ENCODE measurements at regions of chr3 and their contacts with region 1.

Region 1: GRCh38 chr3:120095226-120095978 is 1.2 kb upstream of the GSK3B start:
- DNase-seq: peak; percentile 85
- ATAC-seq: peak; percentile 20
- H3K4me3 Mint-ChIP-seq: no peak overlapping the region
- H3K27ac Mint-ChIP-seq: no peak overlapping the region
- H3K4me1 Mint-ChIP-seq: peaks cover 12% of the 10 kb centered on the region
- H3K27me3 Mint-ChIP-seq: no peaks in the 10 kb centered on the region
- CTCF ChIP-seq: no peak

Region 2: GRCh38 chr3:119293871-119294695 is 801.3 kb before region 1 on chr3 and contains the start of gene ARHGAP31:
- CTCF ChIA-PET with region 1: no interaction called
- POLR2A ChIA-PET with region 1: no interaction called
- intact Hi-C with region 1: loop called (anchors 1 kb)
- DNase-seq: peak; percentile 56
- ATAC-seq: peak; percentile 73
- H3K4me3 Mint-ChIP-seq: peak within 1 kb of the TSS; percentile 88
- H3K27ac Mint-ChIP-seq: peak within 1 kb of the TSS; percentile 90
- H3K4me1 Mint-ChIP-seq: peaks cover 61% of the 10 kb centered on the region
- H3K27me3 Mint-ChIP-seq: no peaks in the 10 kb centered on the region
- CTCF ChIP-seq: no peak
- total RNA-seq, gene ARHGAP31: 23.7 and 26.0 TPM in 2 replicates

Region 3: DNA sequence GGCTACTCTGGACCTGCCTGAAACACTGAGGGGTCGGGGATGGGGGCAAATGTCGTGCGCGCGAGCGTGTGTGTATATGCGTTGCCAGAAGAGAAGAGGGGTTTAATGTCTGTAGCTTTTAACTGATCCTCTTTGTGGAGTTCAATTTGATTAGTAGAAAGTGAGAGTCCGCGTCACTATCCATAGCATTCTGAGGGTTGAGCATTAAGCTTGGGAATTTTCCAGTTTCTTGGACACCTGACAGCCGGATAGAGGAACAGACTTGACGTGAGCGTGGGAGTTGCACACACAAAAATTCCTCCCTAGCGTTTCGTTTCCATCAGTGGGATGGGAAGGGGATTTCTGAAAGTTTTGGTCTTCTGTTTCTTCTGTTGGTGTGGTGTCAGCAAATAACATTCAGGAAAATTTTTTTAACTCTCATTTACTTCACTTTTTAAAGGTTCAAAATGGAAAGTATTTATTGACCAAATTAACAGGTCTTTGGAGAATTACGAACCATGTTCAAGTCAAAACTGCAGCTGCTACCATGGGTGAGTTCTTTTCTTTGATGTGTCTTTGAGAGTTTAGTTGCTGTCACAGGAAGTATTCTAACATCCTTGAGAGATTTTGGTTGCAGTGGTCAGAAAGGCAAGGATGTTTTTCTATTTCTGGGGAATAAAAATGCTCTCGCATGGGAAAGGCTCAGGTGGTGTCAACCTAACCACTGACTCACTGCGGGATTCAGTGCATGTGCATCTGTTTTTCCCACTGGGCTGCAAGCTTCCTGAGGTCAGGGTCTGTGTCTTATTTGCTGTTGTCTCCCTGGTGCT is 625.8 kb before region 1 on chr3:
- CTCF ChIA-PET with region 1: no interaction called
- POLR2A ChIA-PET with region 1: interaction called, 7 read pairs
- intact Hi-C with region 1: loop called (anchors 1 kb)
- DNase-seq: no peak
- ATAC-seq: peak; percentile 45
- H3K4me3 Mint-ChIP-seq: peak overlapping the region; percentile 93
- H3K27ac Mint-ChIP-seq: peak overlapping the region; percentile 90
- H3K4me1 Mint-ChIP-seq: peaks cover 32% of the 10 kb centered on the region
- H3K27me3 Mint-ChIP-seq: no peaks in the 10 kb centered on the region
- CTCF ChIP-seq: no peak

Region 4: DNA sequence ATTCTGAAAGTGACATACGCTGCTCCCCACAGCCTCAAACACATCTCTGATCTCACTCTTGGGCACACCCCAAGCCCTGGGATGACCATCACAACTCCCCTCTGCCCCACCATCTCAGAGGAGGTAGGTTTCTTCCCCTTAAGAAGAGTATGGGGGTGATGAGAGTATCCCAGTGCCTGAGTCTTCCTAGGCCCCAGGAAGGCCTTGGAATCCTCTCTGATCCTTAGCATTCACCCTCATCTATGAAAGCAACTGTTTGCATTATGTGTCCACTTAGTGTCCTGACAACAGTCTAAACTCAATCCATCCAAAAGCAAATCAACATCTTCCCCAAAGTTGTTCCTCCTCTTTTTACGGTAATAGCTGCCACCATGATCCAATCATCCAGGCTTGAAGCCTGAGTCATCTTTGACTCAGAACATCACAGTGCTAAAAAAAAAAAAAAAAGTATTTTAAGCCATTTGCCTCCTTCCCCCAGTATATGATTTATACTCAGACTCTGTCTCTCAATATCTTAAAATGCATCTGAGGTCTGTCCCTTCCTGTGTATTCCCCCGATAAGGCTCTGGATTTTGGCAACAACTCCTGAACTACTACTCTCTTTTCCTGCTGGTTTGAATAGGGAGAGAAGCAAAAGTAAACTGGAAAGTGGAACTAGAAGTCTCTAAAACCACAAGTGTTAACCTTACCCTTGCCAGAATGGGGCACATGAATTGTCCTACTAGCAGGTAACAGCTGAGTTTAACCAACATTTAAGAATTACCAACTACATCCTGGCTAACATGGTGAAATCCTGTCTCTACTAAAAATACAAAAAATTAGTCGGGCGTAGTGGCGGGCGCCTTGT is 457.5 kb before region 1 on chr3:
- CTCF ChIA-PET with region 1: no interaction called
- POLR2A ChIA-PET with region 1: interaction called, 3 read pairs
- intact Hi-C with region 1: loop called (anchors 1 kb)
- DNase-seq: no peak
- ATAC-seq: peak; percentile 54
- H3K4me3 Mint-ChIP-seq: peak overlapping the region; percentile 78
- H3K27ac Mint-ChIP-seq: peak overlapping the region; percentile 98
- H3K4me1 Mint-ChIP-seq: peaks cover 44% of the 10 kb centered on the region
- H3K27me3 Mint-ChIP-seq: no peaks in the 10 kb centered on the region
- CTCF ChIP-seq: no peak

Region 5: DNA sequence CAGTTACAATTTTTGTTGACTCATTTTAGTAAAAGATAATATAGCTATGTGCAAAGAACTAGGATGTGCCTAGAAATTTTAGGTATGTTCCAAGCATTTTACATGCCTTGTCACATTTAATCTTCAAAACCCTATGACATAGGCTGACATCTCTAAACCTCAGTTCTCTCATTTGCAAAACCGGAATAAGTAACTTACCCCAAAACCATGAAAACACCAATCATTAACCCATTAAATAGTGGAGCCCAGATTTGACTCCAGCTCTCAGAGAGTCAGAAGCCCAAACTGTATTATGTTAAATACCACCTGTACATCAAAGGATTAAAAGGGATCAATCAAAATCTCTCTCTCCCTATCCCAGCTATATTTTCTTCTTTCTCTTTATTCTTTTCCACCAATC is 37.8 kb before region 1 on chr3:
- CTCF ChIA-PET with region 1: interaction called, 3 read pairs
- POLR2A ChIA-PET with region 1: interaction called, 16 read pairs
- intact Hi-C with region 1: loop called (anchors 2 kb)
- DNase-seq: no peak
- ATAC-seq: no peak
- H3K4me3 Mint-ChIP-seq: no peak overlapping the region
- H3K27ac Mint-ChIP-seq: no peak overlapping the region
- H3K4me1 Mint-ChIP-seq: peaks cover 59% of the 10 kb centered on the region
- H3K27me3 Mint-ChIP-seq: no peaks in the 10 kb centered on the region
- CTCF ChIP-seq: no peak

Region 6: GRCh38 chr3:120348981-120349818 is 253.8 kb after region 1 on chr3 and contains the start of gene LRRC58:
- CTCF ChIA-PET with region 1: interaction called, 4 read pairs
- POLR2A ChIA-PET with region 1: interaction called, 45 read pairs
- intact Hi-C with region 1: loop called (anchors 1 kb)
- DNase-seq: peak; percentile 90
- ATAC-seq: peak; percentile 92
- H3K4me3 Mint-ChIP-seq: peak within 1 kb of the TSS; percentile 97
- H3K27ac Mint-ChIP-seq: peak within 1 kb of the TSS; percentile 93
- H3K4me1 Mint-ChIP-seq: peaks cover 42% of the 10 kb centered on the region
- H3K27me3 Mint-ChIP-seq: no peaks in the 10 kb centered on the region
- CTCF ChIP-seq: no peak
- total RNA-seq, gene LRRC58: 16.8 and 18.3 TPM in 2 replicates

Region 7: DNA sequence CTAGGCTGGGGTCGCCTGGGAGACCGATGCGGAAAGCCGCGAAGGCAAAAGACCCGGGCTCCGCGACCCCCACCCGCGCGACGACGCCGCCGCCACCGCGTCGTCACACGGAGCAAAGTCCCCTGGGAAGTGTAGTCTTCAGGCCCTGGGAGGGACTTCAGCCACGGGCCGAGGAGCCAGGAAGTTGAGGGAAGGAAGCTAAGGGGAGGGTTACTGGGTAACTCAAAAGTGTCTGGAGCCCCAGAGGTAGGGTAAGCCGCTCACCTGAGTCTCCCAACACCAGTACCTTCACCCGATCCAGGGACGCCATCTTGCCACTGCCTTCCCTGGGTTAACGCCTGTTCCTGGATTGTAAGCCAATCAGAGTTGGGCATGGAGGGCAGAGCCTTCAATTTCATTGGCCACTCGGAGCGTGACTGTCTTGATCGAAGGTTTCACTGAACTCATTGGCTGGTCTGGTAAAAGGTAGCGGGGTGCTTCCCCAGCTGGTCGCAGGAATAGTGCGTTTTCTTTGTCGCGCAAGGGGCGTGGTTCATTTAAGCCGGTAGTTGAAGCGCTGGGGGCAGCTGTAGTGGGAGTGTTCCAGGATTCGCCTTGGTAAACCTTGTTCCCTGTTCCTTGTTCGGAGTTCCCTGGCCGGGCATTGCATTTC is 646.9 kb after region 1 on chr3 and contains the starts of genes GTF2E1 and RABL3:
- CTCF ChIA-PET with region 1: no interaction called
- POLR2A ChIA-PET with region 1: interaction called, 9 read pairs
- intact Hi-C with region 1: loop called (anchors 1 kb)
- DNase-seq: peak; percentile 88
- ATAC-seq: peak; percentile 96
- H3K4me3 Mint-ChIP-seq: peak within 1 kb of the TSS; percentile 96
- H3K27ac Mint-ChIP-seq: peak within 1 kb of the TSS; percentile 97
- H3K4me1 Mint-ChIP-seq: peaks cover 36% of the 10 kb centered on the region
- H3K27me3 Mint-ChIP-seq: no peaks in the 10 kb centered on the region
- CTCF ChIP-seq: no peak
- total RNA-seq, gene GTF2E1: 22.1 and 22.9 TPM in 2 replicates
- total RNA-seq, gene RABL3: 29.7 and 29.9 TPM in 2 replicates